CD8-positive, alpha-beta T cell (primary cell): ENCODE measurements at regions of chr17 and their contacts with region 1.

Region 1: DNA sequence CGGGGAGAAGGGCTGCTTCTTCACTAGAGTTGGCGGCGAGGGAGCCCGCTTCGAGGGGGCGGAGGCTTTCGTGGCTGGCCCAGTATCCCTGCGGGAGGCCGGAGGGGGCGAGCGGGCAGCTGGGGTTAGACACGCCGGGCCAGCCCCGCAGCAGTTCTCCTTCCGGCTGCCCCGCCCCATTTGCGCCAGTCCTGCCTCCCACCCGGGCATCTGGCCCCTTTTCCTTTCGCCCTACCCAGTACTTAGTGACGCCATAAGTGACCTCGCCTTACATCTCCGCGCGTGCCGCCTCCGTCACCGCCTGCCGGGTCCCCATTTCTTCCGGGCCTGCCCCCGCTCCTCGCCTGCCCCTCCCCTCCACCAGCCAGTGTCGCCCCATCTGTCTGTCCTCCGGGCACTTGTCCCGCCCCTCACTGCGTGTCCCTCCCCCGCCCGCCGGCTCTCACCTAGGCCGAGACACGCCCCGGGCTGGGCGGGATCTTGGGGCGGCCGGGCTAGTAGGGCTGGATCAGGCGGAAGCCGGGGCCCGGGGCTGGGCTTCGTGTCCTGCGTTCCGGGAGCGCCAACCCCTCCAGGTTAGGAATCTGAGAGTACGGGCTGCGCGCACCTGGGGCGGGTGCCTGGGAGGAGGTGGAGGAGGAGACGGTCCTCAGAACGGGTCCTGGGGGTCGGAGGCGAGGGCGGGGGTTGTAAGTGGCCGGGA is 14.3 kb downstream of the SPATA32 start:
- DNase-seq: peak; percentile 95 to 99 (median 98)
- ATAC-seq: peak; percentile 81
- H3K4me3 ChIP-seq: peak overlapping the region; percentile 58 to 94
- H3K4me3 Mint-ChIP-seq: peak overlapping the region; percentile 87
- H3K27ac ChIP-seq: peak overlapping the region; percentile 88 to 89
- H3K27ac Mint-ChIP-seq: peak overlapping the region; percentile 97
- H3K4me1 ChIP-seq: peaks cover 67% of the 10 kb centered on the region
- H3K4me1 Mint-ChIP-seq: peaks cover 61% of the 10 kb centered on the region
- H3K27me3 ChIP-seq: no peaks in the 10 kb centered on the region
- H3K27me3 Mint-ChIP-seq: no peaks in the 10 kb centered on the region
- CTCF ChIP-seq: no peak

Region 2: DNA sequence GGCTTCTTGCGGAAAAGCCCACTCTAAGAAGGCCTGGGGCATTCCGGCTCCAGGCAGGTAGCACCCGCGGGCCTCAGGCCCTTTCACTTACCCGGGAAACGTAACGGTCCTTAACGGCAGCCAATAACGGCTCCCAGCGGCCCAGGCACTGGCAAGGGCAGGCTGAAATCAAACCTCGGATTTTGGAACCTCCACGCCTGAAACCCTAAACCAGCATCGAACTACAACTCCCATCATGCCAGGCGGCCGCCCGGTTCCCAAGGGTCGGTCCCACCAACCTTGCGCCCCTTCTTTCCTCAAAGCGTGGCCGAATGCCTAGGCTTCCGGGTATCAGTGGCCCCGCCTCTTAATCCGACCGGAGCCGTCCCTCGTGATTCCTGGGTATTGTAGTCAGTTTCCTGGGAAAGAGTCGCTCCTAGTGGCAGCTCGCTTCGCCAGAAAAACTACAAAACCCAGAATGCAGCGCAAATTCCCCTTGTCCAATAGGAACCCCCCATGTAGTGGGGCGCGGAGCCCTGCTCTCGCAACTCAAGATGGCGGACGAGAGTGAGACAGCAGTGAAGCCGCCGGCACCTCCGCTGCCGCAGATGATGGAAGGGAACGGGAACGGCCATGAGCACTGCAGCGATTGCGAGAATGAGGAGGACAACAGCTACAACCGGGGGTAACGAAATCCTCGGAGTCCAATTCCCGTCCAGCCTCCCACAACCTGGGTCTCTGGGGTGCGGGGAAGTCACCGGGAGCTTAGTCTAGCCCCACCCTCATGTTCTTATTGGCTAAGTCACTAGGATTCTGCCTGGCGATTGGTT is 186.6 kb before region 1 on chr17 and contains the start of gene NMT1:
- CTCF ChIA-PET with region 1: no interaction called
- POLR2A ChIA-PET with region 1: no interaction called
- intact Hi-C with region 1: loop called in 1 of 2 experiments (anchors 5 kb)
- DNase-seq: peak; percentile 88 to 99 (median 94)
- ATAC-seq: peak; percentile 90
- H3K4me3 ChIP-seq: peak within 1 kb of the TSS; percentile 84 to 88
- H3K4me3 Mint-ChIP-seq: peak within 1 kb of the TSS; percentile 97
- H3K27ac ChIP-seq: peak within 1 kb of the TSS; percentile 81 to 91
- H3K27ac Mint-ChIP-seq: peak within 1 kb of the TSS; percentile 99
- H3K4me1 ChIP-seq: peaks cover 32% of the 10 kb centered on the region
- H3K4me1 Mint-ChIP-seq: peaks cover 43% of the 10 kb centered on the region
- H3K27me3 ChIP-seq: no peaks in the 10 kb centered on the region
- H3K27me3 Mint-ChIP-seq: no peaks in the 10 kb centered on the region
- CTCF ChIP-seq: no peak
- total RNA-seq, gene NMT1: 62.6 to 66.6 TPM

Region 3: GRCh38 chr17:45161019-45161825 is 86.4 kb before region 1 on chr17:
- CTCF ChIA-PET with region 1: no interaction called
- POLR2A ChIA-PET with region 1: interaction called, 11 read pairs
- intact Hi-C with region 1: loop called in 1 of 2 experiments (anchors 1 kb)
- DNase-seq: peak; percentile 96 to 100 (median 98)
- ATAC-seq: peak; percentile 93
- H3K4me3 ChIP-seq: peak overlapping the region; percentile 82 to 84
- H3K4me3 Mint-ChIP-seq: peak overlapping the region; percentile 93
- H3K27ac ChIP-seq: peak overlapping the region; percentile 90 to 97
- H3K27ac Mint-ChIP-seq: peak overlapping the region; percentile 99
- H3K4me1 ChIP-seq: peaks cover 34% of the 10 kb centered on the region
- H3K4me1 Mint-ChIP-seq: peaks cover 40% of the 10 kb centered on the region
- H3K27me3 ChIP-seq: no peaks in the 10 kb centered on the region
- H3K27me3 Mint-ChIP-seq: no peaks in the 10 kb centered on the region
- CTCF ChIP-seq: no peak

Region 4: GRCh38 chr17:45228763-45229539 is 18.6 kb before region 1 on chr17:
- CTCF ChIA-PET with region 1: interaction called, 1,097 read pairs
- POLR2A ChIA-PET with region 1: interaction called, 124 read pairs
- intact Hi-C with region 1: loop called (anchors 1 kb)
- DNase-seq: peak; percentile 60 to 95 (median 83)
- ATAC-seq: peak; percentile 50
- H3K4me3 ChIP-seq: peak overlapping the region; percentile 84 to 97
- H3K4me3 Mint-ChIP-seq: peak overlapping the region; percentile 100
- H3K27ac ChIP-seq: peak overlapping the region; percentile 97
- H3K27ac Mint-ChIP-seq: peak overlapping the region; percentile 100
- H3K4me1 ChIP-seq: peaks cover 93% of the 10 kb centered on the region
- H3K4me1 Mint-ChIP-seq: peaks cover 82% of the 10 kb centered on the region
- H3K27me3 ChIP-seq: no peaks in the 10 kb centered on the region
- H3K27me3 Mint-ChIP-seq: no peaks in the 10 kb centered on the region
- CTCF ChIP-seq: no peak

Region 5: GRCh38 chr17:45261577-45262515 is 14.3 kb after region 1 on chr17 and contains the start of gene SPATA32:
- CTCF ChIA-PET with region 1: interaction called, 11 read pairs
- POLR2A ChIA-PET with region 1: interaction called, 21 read pairs
- intact Hi-C with region 1: loop called (anchors 1 kb)
- DNase-seq: peak; percentile 37 to 85 (median 75)
- ATAC-seq: peak; percentile 86
- H3K4me3 ChIP-seq: peak within 1 kb of the TSS; percentile 71 to 76
- H3K4me3 Mint-ChIP-seq: peak within 1 kb of the TSS; percentile 83
- H3K27ac ChIP-seq: peak within 1 kb of the TSS; percentile 29 to 74
- H3K27ac Mint-ChIP-seq: peak within 1 kb of the TSS; percentile 87
- H3K4me1 ChIP-seq: peaks cover 32% of the 10 kb centered on the region
- H3K4me1 Mint-ChIP-seq: peaks cover 29% of the 10 kb centered on the region
- H3K27me3 ChIP-seq: no peaks in the 10 kb centered on the region
- H3K27me3 Mint-ChIP-seq: no peaks in the 10 kb centered on the region
- CTCF ChIP-seq: no peak
- total RNA-seq, gene SPATA32: 0.22 TPM in 1 of 2 experiments, not detected in the other

Region 6: GRCh38 chr17:45277216-45277849 is 29.8 kb after region 1 on chr17:
- CTCF ChIA-PET with region 1: interaction called, 14 read pairs
- POLR2A ChIA-PET with region 1: interaction called, 5 read pairs
- intact Hi-C with region 1: no loop called
- DNase-seq: peak; percentile 78 to 93 (median 91)
- ATAC-seq: peak; percentile 99
- H3K4me3 ChIP-seq: no peak overlapping the region
- H3K4me3 Mint-ChIP-seq: no peak overlapping the region
- H3K27ac ChIP-seq: no peak overlapping the region
- H3K27ac Mint-ChIP-seq: peak overlapping the region; percentile 41
- H3K4me1 ChIP-seq: no peaks in the 10 kb centered on the region
- H3K4me1 Mint-ChIP-seq: peaks cover 7% of the 10 kb centered on the region
- H3K27me3 ChIP-seq: no peaks in the 10 kb centered on the region
- H3K27me3 Mint-ChIP-seq: no peaks in the 10 kb centered on the region
- CTCF ChIP-seq: peak; percentile 73

Region 7: GRCh38 chr17:45317112-45317928 is 69.7 kb after region 1 on chr17:
- CTCF ChIA-PET with region 1: interaction called, 9 read pairs
- POLR2A ChIA-PET with region 1: interaction called, 28 read pairs
- intact Hi-C with region 1: loop called (anchors 1 kb)
- DNase-seq: peak; percentile 99 to 100 (median 100)
- ATAC-seq: peak; percentile 81
- H3K4me3 ChIP-seq: peak overlapping the region; percentile 55 to 81
- H3K4me3 Mint-ChIP-seq: peak overlapping the region; percentile 95
- H3K27ac ChIP-seq: peak overlapping the region; percentile 75 to 81
- H3K27ac Mint-ChIP-seq: peak overlapping the region; percentile 94
- H3K4me1 ChIP-seq: peaks cover 78% of the 10 kb centered on the region
- H3K4me1 Mint-ChIP-seq: peaks cover 80% of the 10 kb centered on the region
- H3K27me3 ChIP-seq: no peaks in the 10 kb centered on the region
- H3K27me3 Mint-ChIP-seq: no peaks in the 10 kb centered on the region
- CTCF ChIP-seq: no peak

Region 8: DNA sequence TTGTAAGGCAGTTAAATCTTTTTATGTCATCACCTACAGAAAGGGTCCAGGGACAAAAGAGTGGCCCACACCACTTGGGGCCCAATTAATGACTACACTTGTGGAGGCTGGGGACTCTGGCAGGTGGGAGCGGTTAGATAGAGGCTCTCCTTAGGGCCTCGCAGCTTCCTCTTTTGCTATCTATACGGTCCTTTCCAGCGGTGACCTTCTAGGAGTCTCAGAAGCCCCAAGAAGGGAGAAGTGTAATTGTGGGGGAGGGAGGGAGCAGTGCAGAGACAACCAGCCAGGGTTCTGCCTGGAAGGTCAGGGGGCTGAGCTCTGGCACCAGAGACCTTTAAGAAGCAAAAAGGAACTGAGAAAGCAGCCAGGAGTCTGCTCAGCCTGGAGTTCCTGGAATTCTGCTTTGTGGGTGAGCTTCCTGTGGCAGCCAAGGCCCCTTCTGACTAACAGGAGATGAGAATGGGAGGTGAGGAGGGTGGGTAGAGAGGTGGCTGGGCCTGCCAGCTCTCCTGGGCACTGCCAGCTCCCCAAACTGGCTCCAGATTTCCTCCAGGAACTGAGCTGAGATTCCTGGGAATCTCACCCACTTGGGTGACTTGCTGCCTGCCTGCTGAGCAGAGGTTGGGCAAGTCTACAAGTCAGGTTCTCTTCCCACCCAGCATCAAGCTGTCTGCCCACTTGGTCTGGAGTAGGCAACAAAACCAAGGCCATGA is 85.6 kb after region 1 on chr17:
- CTCF ChIA-PET with region 1: no interaction called
- POLR2A ChIA-PET with region 1: no interaction called
- intact Hi-C with region 1: no loop called
- DNase-seq: no peak
- ATAC-seq: no peak
- H3K4me3 ChIP-seq: no peak overlapping the region
- H3K4me3 Mint-ChIP-seq: no peak overlapping the region
- H3K27ac ChIP-seq: no peak overlapping the region
- H3K27ac Mint-ChIP-seq: no peak overlapping the region
- H3K4me1 ChIP-seq: no peaks in the 10 kb centered on the region
- H3K4me1 Mint-ChIP-seq: peaks cover 6% of the 10 kb centered on the region
- H3K27me3 ChIP-seq: no peaks in the 10 kb centered on the region
- H3K27me3 Mint-ChIP-seq: no peaks in the 10 kb centered on the region
- CTCF ChIP-seq: no peak